ENCODE measurements at regions of chr9 and their contacts with region 1.

Region 1: DNA sequence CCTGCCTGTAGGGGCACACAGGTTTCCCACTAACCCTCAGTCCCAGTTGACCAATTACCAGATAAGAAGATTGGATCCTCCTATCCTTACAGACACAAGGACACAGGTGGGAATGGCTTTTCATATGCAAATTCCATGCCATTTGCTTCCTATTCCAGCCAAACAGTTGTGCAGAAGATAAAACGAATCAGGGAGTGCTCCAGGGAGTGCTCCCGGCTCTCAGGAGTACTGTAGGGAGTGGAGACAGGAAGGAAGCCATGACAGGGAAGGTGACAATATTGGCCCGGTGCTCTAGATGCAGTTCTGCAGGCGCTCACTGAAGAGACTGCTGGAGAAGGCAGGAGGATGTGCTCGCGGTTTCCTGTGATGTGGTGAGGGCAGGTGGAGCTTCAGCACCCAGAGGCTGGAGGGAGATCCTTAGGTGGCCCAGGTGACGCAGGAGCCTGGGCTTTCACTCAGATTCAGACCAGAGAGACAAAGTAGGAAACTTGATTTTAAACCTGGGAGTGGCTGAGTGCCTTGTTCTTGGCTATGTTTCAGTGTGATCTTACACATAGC is 260.0 kb downstream of the AUH start:
- DNase-seq: peak; percentile 86 to 95 (median 89)
- H3K4me3 ChIP-seq: no peak overlapping the region
- H3K4me3 Mint-ChIP-seq: peak overlapping the region in 7 of 8 donors; percentile 2 to 81 (median 49)
- H3K27ac ChIP-seq: no peak overlapping the region
- H3K27ac Mint-ChIP-seq: peak overlapping the region; percentile 58 to 96 (median 84)
- H3K4me1 ChIP-seq: peaks cover 39% of the 10 kb centered on the region
- H3K4me1 Mint-ChIP-seq: peaks cover 25 to 40% (median 32%) of the 10 kb centered on the region in 4 donors
- H3K27me3 ChIP-seq: no peaks in the 10 kb centered on the region
- H3K27me3 Mint-ChIP-seq: peaks cover 3 to 5% of the 10 kb centered on the region in 2 donors

Region 2: GRCh38 chr9:90795871-90796317 is 305.8 kb before region 1 on chr9:
- CTCF ChIA-PET with region 1: no interaction called
- POLR2A ChIA-PET with region 1: no interaction called
- intact Hi-C with region 1: no loop called
- DNase-seq: no peak
- H3K4me3 ChIP-seq: no peak overlapping the region
- H3K4me3 Mint-ChIP-seq: no peak overlapping the region
- H3K27ac ChIP-seq: no peak overlapping the region
- H3K27ac Mint-ChIP-seq: no peak overlapping the region
- H3K4me1 ChIP-seq: no peaks in the 10 kb centered on the region
- H3K4me1 Mint-ChIP-seq: peaks cover 0 to 1% (median under 1%) of the 10 kb centered on the region in 4 donors
- H3K27me3 ChIP-seq: no peaks in the 10 kb centered on the region
- H3K27me3 Mint-ChIP-seq: peaks cover 30 to 34% of the 10 kb centered on the region in 2 donors

Region 3: DNA sequence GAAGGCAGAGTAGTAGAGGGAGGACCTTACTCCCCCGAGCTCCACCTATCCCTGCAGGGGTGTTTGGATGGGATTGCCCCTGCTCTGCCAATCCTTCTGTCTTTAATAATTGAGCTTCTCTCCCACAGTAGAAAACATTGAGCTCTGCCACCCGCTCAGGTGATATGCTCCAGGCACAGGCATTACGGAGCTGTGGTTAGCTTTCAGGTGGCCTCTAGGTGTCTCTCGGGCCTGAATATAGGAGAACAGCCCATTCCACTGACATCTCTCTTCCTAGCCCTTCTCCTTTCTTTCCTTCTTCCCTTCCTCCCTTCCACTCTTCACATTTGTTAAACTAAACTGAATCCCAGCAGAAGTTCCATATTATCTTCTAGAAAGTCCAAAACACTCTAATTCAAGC is 96.7 kb before region 1 on chr9:
- CTCF ChIA-PET with region 1: no interaction called
- POLR2A ChIA-PET with region 1: no interaction called
- intact Hi-C with region 1: no loop called
- DNase-seq: no peak
- H3K4me3 ChIP-seq: no peak overlapping the region
- H3K4me3 Mint-ChIP-seq: peak overlapping the region in 2 of 8 donors; percentile 0 to 4
- H3K27ac ChIP-seq: no peak overlapping the region
- H3K27ac Mint-ChIP-seq: no peak overlapping the region
- H3K4me1 ChIP-seq: no peaks in the 10 kb centered on the region
- H3K4me1 Mint-ChIP-seq: no peaks in the 10 kb centered on the region
- H3K27me3 ChIP-seq: no peaks in the 10 kb centered on the region
- H3K27me3 Mint-ChIP-seq: peaks cover 1 to 2% of the 10 kb centered on the region in 2 donors

Region 4: GRCh38 chr9:91060503-91061343 is 41.0 kb before region 1 on chr9:
- CTCF ChIA-PET with region 1: no interaction called
- POLR2A ChIA-PET with region 1: no interaction called
- intact Hi-C with region 1: no loop called
- DNase-seq: no peak
- H3K4me3 ChIP-seq: no peak overlapping the region
- H3K4me3 Mint-ChIP-seq: no peak overlapping the region
- H3K27ac ChIP-seq: no peak overlapping the region
- H3K27ac Mint-ChIP-seq: no peak overlapping the region
- H3K4me1 ChIP-seq: no peaks in the 10 kb centered on the region
- H3K4me1 Mint-ChIP-seq: no peaks in the 10 kb centered on the region
- H3K27me3 ChIP-seq: no peaks in the 10 kb centered on the region
- H3K27me3 Mint-ChIP-seq: peaks cover 2 to 4% of the 10 kb centered on the region in 2 donors

Region 5: DNA sequence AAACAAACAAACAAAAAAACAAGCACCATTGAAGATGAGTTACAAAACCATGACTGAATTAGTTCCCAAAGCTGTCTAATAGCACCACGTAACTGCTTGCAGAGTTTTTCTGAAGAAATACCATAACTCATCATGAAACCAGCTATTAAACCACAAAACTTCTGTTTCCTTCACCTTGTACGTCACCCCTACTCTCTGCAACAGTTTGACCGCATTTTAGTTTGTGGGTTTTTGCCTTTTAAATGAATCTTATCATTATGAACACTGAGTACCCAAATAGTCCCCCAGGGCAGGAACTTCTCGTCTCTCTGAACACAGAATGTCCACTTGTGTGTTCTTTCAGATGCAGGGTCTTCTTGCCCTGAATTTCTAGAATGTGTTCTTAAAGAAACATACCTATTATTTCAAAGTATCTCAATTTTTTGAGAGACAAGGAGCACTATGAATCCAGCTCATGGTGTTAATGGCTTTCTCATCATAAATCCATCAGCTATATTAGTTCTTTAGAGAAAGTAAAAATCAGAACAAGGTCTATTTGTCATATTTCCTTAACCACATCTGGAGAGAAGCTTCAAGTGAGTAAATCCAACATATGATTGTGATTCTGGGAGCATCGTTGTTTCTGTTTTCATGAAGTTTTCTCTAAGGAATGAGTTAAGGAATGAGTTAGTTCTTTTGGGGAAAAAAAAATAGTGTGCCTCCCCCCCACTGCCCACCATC is 49.5 kb after region 1 on chr9:
- CTCF ChIA-PET with region 1: interaction called, 4 read pairs
- POLR2A ChIA-PET with region 1: interaction called, 7 read pairs
- intact Hi-C with region 1: loop called (anchors 2 kb)
- DNase-seq: peak; percentile 70 to 83 (median 78)
- H3K4me3 ChIP-seq: peak overlapping the region in 1 of 2 donors; percentile 18
- H3K4me3 Mint-ChIP-seq: peak overlapping the region in 7 of 8 donors; percentile 18 to 74 (median 62)
- H3K27ac ChIP-seq: no peak overlapping the region
- H3K27ac Mint-ChIP-seq: peak overlapping the region; percentile 37 to 87 (median 67)
- H3K4me1 ChIP-seq: peaks cover 23% of the 10 kb centered on the region
- H3K4me1 Mint-ChIP-seq: peaks cover 29 to 46% (median 37%) of the 10 kb centered on the region in 4 donors
- H3K27me3 ChIP-seq: no peaks in the 10 kb centered on the region
- H3K27me3 Mint-ChIP-seq: no peaks in the 10 kb centered on the region

Region 6: GRCh38 chr9:91162784-91163443 is 61.2 kb after region 1 on chr9:
- CTCF ChIA-PET with region 1: no interaction called
- POLR2A ChIA-PET with region 1: no interaction called
- intact Hi-C with region 1: no loop called
- DNase-seq: peak in 2 of 5 donors; percentile 25
- H3K4me3 ChIP-seq: no peak overlapping the region
- H3K4me3 Mint-ChIP-seq: peak overlapping the region in 7 of 8 donors; percentile 65 to 90 (median 74)
- H3K27ac ChIP-seq: no peak overlapping the region
- H3K27ac Mint-ChIP-seq: peak overlapping the region; percentile 58 to 86 (median 77)
- H3K4me1 ChIP-seq: peaks cover 43% of the 10 kb centered on the region
- H3K4me1 Mint-ChIP-seq: peaks cover 32 to 47% (median 40%) of the 10 kb centered on the region in 4 donors
- H3K27me3 ChIP-seq: no peaks in the 10 kb centered on the region
- H3K27me3 Mint-ChIP-seq: no peaks in the 10 kb centered on the region

Region 7: DNA sequence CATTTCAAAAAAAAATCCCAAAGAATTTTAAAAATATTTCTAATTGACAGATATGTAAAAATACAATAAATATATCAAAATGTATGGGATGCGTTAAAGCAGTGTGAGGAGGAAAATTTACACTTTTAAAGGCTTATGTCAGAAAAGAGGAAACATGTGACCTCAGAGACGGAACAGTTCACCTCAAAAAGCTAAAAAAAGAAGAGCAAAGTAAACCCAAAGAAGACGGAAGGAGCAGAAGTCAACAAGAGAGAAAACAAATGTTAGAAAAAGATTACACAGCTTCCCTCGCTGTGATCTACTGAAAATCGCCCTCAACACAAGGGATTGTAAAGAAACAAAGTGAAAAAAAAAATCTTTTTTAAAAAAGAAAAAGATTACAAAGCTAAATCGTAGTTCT is 73.1 kb after region 1 on chr9:
- CTCF ChIA-PET with region 1: no interaction called
- POLR2A ChIA-PET with region 1: interaction called, 3 read pairs
- intact Hi-C with region 1: loop called (anchors 2 kb)
- DNase-seq: peak in 4 of 5 donors; percentile 21 to 30 (median 24)
- H3K4me3 ChIP-seq: no peak overlapping the region
- H3K4me3 Mint-ChIP-seq: peak overlapping the region; percentile 37 to 84 (median 55)
- H3K27ac ChIP-seq: no peak overlapping the region
- H3K27ac Mint-ChIP-seq: peak overlapping the region in 3 of 7 donors; percentile 9 to 57 (median 11)
- H3K4me1 ChIP-seq: peaks cover 29% of the 10 kb centered on the region
- H3K4me1 Mint-ChIP-seq: peaks cover 23 to 41% (median 29%) of the 10 kb centered on the region in 4 donors
- H3K27me3 ChIP-seq: no peaks in the 10 kb centered on the region
- H3K27me3 Mint-ChIP-seq: no peaks in the 10 kb centered on the region

Region 8: GRCh38 chr9:91193658-91194391 is 92.1 kb after region 1 on chr9:
- CTCF ChIA-PET with region 1: interaction called, 4 read pairs
- POLR2A ChIA-PET with region 1: no interaction called
- intact Hi-C with region 1: loop called (anchors 2 kb)
- DNase-seq: peak; percentile 68 to 75 (median 71)
- H3K4me3 ChIP-seq: peak overlapping the region; percentile 38 to 56
- H3K4me3 Mint-ChIP-seq: peak overlapping the region; percentile 87 to 96 (median 91)
- H3K27ac ChIP-seq: no peak overlapping the region
- H3K27ac Mint-ChIP-seq: peak overlapping the region; percentile 84 to 95 (median 89)
- H3K4me1 ChIP-seq: peaks cover 30% of the 10 kb centered on the region
- H3K4me1 Mint-ChIP-seq: peaks cover 16 to 38% (median 23%) of the 10 kb centered on the region in 4 donors
- H3K27me3 ChIP-seq: no peaks in the 10 kb centered on the region
- H3K27me3 Mint-ChIP-seq: no peaks in the 10 kb centered on the region

Region 9: DNA sequence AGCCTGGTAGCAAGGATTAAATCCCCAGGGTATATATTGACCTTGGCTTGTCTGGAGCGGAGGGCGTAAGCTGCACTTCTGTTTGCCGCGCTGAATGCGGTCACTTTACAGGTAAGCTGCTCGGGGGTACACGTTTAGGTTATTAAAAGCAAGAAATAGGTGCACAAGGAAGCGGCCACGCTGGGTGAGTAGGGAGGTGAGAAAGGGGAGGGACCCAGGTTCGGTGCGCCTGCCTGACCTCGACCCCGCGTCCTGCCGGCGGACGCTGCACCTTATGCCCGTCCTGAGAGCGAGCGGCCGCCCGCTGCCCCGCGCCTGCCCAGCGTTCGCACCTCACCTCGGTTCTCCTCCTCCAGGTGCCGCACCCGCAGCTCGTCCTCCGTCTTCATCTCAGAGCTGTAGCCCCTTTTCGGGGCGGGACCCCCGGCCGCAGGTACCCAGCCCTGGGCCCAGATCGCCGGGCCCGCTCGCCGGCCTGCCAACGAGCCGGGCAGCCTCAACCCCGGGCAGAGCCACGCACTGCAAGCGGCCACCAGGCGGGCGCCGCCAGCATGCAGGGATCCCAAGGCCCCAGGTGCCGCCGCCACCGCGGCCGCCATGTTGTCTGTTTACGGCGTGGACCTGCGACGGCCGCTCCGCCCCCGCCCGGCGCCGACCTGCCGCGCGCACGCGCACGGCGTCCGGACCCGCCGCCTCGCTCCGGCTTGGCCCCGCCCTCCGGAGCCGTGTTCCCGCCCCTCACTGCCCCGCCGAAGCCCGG is 259.8 kb after region 1 on chr9 and contains the start of gene AUH:
- CTCF ChIA-PET with region 1: interaction called, 3 read pairs
- POLR2A ChIA-PET with region 1: interaction called, 5 read pairs
- intact Hi-C with region 1: loop called (anchors 5 kb)
- DNase-seq: peak; percentile 80 to 87 (median 85)
- H3K4me3 ChIP-seq: peak within 1 kb of the TSS; percentile 38 to 84
- H3K4me3 Mint-ChIP-seq: peak within 1 kb of the TSS; percentile 94 to 99 (median 98)
- H3K27ac ChIP-seq: peak within 1 kb of the TSS; percentile 77
- H3K27ac Mint-ChIP-seq: peak within 1 kb of the TSS; percentile 82 to 98 (median 94)
- H3K4me1 ChIP-seq: peaks cover 39% of the 10 kb centered on the region
- H3K4me1 Mint-ChIP-seq: peaks cover 33 to 56% (median 40%) of the 10 kb centered on the region in 4 donors
- H3K27me3 ChIP-seq: no peaks in the 10 kb centered on the region
- H3K27me3 Mint-ChIP-seq: no peaks in the 10 kb centered on the region
- total RNA-seq, gene AUH: 23.6 to 25.2 TPM